Mucosa of descending colon (tissue), 3 donors: ENCODE measurements at regions of chr13 and their contacts with region 1.

Region 1: GRCh38 chr13:29595380-29596063 is at the start of gene SLC7A1:
- DNase-seq: peak; percentile 80 to 89 (median 89)
- ATAC-seq: peak; percentile 90
- H3K4me3 ChIP-seq: peak within 1 kb of the TSS; percentile 63
- H3K4me1 ChIP-seq: no peaks in the 10 kb centered on the region
- CTCF ChIP-seq: no peak
- total RNA-seq, gene SLC7A1: 23.8 to 36.0 (median 28.0) TPM

Region 2: GRCh38 chr13:29435125-29435911 is 160.2 kb before region 1 on chr13:
- intact Hi-C with region 1: loop called in 1 of 2 experiments (anchors 10 kb)
- DNase-seq: peak in 1 of 3 donors; percentile 5
- ATAC-seq: peak; percentile 57
- H3K4me3 ChIP-seq: no peak overlapping the region
- H3K4me1 ChIP-seq: no peaks in the 10 kb centered on the region
- CTCF ChIP-seq: no peak

Region 3: GRCh38 chr13:29674532-29674931 is 79.0 kb after region 1 on chr13:
- intact Hi-C with region 1: no loop called
- DNase-seq: no peak
- ATAC-seq: no peak
- H3K4me3 ChIP-seq: no peak overlapping the region
- H3K4me1 ChIP-seq: no peaks in the 10 kb centered on the region
- CTCF ChIP-seq: no peak

Region 4: GRCh38 chr13:29884671-29885430 is 289.3 kb after region 1 on chr13:
- intact Hi-C with region 1: no loop called
- DNase-seq: no peak
- ATAC-seq: no peak
- H3K4me3 ChIP-seq: no peak overlapping the region
- H3K4me1 ChIP-seq: no peaks in the 10 kb centered on the region
- CTCF ChIP-seq: no peak